Endothelial cell of umbilical vein (primary cell): ENCODE measurements at regions of chr3 and their contacts with region 1.

Region 1: DNA sequence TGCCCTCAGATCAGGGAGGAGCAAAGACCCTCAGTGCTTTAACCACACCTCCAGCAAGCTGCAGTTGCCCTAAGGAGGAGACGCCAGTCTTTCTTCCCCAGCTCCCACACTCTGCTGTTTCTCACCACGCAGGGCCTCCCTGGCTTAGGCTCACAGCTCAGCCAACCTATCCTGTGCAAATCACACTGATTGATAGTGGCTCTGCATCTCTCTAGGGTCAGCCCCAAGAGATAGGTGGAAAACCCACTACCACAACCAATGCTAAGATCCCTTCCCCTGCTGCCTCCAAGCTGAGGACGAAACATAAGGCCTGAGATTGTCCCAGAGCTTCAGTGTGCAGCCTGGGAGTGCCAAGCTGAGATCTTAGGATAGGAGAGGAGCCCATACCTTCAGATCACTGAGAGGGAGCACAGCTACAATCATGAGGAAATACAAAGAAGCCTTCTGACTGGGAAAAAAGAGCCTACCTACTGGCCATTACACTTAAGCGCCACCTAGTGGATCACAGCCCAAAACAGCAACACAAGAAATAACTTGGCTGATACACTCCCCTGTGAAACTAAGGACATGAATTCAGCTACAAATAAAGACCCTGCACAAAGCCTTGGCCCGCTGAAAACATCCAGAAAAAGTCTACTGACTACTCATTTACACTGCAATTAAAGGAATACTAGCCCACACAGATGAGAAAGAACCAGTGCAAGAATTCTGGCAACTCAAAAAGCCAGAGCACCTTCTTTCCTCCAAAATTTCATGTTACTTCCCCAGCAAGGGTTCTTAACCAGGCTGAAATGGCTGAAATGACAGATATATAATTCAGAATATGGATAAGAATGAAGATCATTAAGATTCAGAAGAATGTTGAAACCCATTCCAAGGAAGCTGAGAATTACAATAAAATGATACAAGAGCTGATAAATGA is 271.5 kb upstream of the DCBLD2 start:
- DNase-seq: peak; percentile 76
- H3K4me3 ChIP-seq: no peak overlapping the region
- H3K27ac ChIP-seq: no peak overlapping the region
- H3K4me1 ChIP-seq: no peaks in the 10 kb centered on the region
- H3K27me3 ChIP-seq: no peaks in the 10 kb centered on the region
- CTCF ChIP-seq: peak; percentile 72 to 74
- POLR2A ChIP-seq: no peak

Region 2: DNA sequence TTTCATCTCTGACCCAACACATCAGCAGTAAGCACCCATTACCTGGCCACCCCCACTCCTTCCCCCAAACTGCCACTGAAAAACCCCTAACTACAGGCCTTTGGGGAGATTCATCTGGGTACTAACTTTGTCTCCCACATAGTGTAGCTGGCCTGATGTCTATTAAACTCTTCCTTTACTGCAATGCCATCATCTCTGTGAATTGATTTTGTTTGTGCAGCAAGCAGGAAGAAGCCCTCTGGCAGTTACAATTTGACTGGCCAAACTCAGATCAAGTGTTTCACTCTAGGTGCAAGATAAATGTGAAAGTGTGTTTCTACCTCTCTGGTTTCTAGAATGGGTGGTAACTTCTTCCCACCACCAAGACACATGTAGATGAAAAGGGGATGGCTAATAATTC is 846.1 kb before region 1 on chr3:
- CTCF ChIA-PET with region 1: no interaction called
- POLR2A ChIA-PET with region 1: no interaction called
- dilution Hi-C with region 1: no loop called
- intact Hi-C with region 1: no loop called
- DNase-seq: no peak
- H3K4me3 ChIP-seq: no peak overlapping the region
- H3K27ac ChIP-seq: no peak overlapping the region
- H3K4me1 ChIP-seq: no peaks in the 10 kb centered on the region
- H3K27me3 ChIP-seq: peaks cover 2 to 11% of the 10 kb centered on the region in 2 experiments
- CTCF ChIP-seq: no peak
- POLR2A ChIP-seq: no peak

Region 3: GRCh38 chr3:98602078-98602678 is 570.8 kb before region 1 on chr3:
- CTCF ChIA-PET with region 1: no interaction called
- POLR2A ChIA-PET with region 1: no interaction called
- dilution Hi-C with region 1: no loop called
- intact Hi-C with region 1: loop called (anchors 10 kb)
- DNase-seq: peak; percentile 76
- H3K4me3 ChIP-seq: no peak overlapping the region
- H3K27ac ChIP-seq: no peak overlapping the region
- H3K4me1 ChIP-seq: no peaks in the 10 kb centered on the region
- H3K27me3 ChIP-seq: no peaks in the 10 kb centered on the region
- CTCF ChIP-seq: peak; percentile 60 to 74
- POLR2A ChIP-seq: no peak

Region 4: DNA sequence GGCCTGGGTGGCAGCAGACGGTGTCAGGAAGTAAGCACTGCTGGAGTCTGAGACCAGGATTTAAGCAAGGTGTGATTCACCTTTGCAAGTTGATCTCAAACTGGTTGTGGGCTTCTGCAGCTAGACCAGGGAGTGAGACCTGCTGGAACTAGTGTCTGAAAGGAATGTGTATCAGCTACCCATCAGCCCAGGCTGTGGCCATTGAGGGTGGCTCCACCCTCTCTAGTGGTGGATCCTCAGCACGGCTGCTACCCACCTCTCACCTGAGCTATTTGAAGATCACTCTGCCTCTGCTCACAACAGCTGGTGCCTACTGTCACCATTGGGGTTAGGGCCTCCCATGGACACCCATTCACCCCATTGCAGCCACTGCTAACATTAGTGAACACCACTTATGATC is 131.2 kb before region 1 on chr3:
- CTCF ChIA-PET with region 1: no interaction called
- POLR2A ChIA-PET with region 1: no interaction called
- dilution Hi-C with region 1: no loop called
- intact Hi-C with region 1: no loop called
- DNase-seq: no peak
- H3K4me3 ChIP-seq: no peak overlapping the region
- H3K27ac ChIP-seq: no peak overlapping the region
- H3K4me1 ChIP-seq: no peaks in the 10 kb centered on the region
- H3K27me3 ChIP-seq: peaks cover 0 to 1% of the 10 kb centered on the region in 2 experiments
- CTCF ChIP-seq: no peak
- POLR2A ChIP-seq: no peak

Region 5: GRCh38 chr3:99108508-99108907 is 64.5 kb before region 1 on chr3:
- CTCF ChIA-PET with region 1: interaction called, 111 read pairs
- POLR2A ChIA-PET with region 1: no interaction called
- dilution Hi-C with region 1: no loop called
- intact Hi-C with region 1: no loop called
- DNase-seq: peak; percentile 97
- H3K4me3 ChIP-seq: no peak overlapping the region
- H3K27ac ChIP-seq: peak overlapping the region; percentile 79
- H3K4me1 ChIP-seq: peaks cover 17% of the 10 kb centered on the region
- H3K27me3 ChIP-seq: no peaks in the 10 kb centered on the region
- CTCF ChIP-seq: no peak
- POLR2A ChIP-seq: no peak

Region 6: DNA sequence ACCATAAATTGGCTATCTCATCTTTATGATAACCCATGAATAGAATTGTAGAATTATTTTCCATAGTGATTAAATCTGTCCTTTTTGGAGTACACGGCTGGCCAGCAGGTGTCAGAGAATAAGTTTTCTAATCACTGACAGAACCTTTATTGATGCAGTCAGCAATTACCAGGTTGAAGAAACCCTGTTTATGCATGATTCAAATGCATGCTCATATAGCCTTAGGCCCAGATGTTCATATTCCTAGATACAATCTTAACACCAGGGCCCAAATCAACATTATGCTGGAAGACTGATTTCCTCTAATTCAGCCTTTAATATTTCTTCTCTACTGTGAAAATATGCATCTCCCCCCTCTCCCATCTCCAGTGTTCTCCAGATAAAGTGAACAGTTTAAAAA is 28.0 kb before region 1 on chr3:
- CTCF ChIA-PET with region 1: interaction called, 10 read pairs
- POLR2A ChIA-PET with region 1: no interaction called
- dilution Hi-C with region 1: no loop called
- intact Hi-C with region 1: no loop called
- DNase-seq: peak; percentile 55
- H3K4me3 ChIP-seq: no peak overlapping the region
- H3K27ac ChIP-seq: no peak overlapping the region
- H3K4me1 ChIP-seq: no peaks in the 10 kb centered on the region
- H3K27me3 ChIP-seq: no peaks in the 10 kb centered on the region
- CTCF ChIP-seq: no peak
- POLR2A ChIP-seq: no peak

Region 7: DNA sequence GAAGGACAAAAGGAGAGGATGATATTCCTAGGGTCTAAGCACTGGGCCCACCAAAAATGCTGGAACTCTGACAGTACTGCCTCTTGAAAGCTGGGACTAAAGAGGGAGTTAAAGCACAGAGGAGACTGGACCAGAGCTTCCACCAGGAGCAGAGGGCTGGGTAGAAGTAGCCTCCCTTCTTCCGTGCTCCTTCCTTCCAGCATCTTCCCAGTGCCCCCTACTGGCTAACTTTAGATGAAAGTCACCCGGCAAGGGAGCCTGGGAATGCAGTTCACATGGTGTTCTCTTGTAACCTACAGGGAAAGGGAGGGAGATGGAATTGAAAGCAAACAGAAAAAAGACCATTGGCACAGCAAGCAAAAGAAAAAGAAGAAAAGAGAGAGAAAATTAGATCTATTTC is 359.2 kb after region 1 on chr3:
- CTCF ChIA-PET with region 1: interaction called, 9 read pairs
- POLR2A ChIA-PET with region 1: no interaction called
- dilution Hi-C with region 1: no loop called
- intact Hi-C with region 1: loop called (anchors 2 kb)
- DNase-seq: peak; percentile 88
- H3K4me3 ChIP-seq: no peak overlapping the region
- H3K27ac ChIP-seq: peak overlapping the region; percentile 5
- H3K4me1 ChIP-seq: no peaks in the 10 kb centered on the region
- H3K27me3 ChIP-seq: no peaks in the 10 kb centered on the region
- CTCF ChIP-seq: peak; percentile 75 to 81
- POLR2A ChIP-seq: no peak

Region 8: DNA sequence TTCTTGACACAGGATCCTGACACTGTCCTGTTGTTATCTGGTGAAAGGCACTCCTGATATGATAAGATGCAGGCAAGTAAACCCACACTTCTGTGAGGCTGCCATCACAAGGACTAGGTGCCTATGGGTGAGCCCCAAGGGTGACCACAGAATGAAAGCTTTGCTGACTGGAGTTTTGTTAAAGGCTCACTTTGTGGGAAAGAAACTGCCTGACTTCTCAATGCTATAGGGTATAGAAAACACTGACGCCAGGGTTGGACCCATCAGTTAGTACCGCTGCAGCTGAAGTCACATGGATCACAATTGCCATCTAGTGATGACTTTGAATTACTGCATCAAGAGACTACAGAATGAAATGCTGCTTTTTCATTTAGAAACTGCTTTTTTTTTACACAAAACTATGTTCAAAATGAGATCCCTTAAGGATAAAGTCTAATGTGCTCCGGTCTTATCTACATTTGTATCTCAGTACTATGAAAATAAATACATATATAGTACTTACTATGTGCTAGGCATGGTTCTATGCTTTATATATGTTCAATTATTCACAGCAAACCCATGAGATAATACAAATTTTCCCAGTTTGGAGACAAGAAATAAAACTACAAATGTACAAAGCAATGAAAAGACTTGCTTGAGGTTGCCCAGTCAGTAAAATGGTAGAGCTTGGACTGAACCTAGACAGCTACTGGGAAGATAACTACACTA is 580.4 kb after region 1 on chr3:
- CTCF ChIA-PET with region 1: interaction called, 31 read pairs
- POLR2A ChIA-PET with region 1: no interaction called
- dilution Hi-C with region 1: no loop called
- intact Hi-C with region 1: loop called (anchors 1 kb)
- DNase-seq: peak; percentile 77
- H3K4me3 ChIP-seq: no peak overlapping the region
- H3K27ac ChIP-seq: peak overlapping the region; percentile 21
- H3K4me1 ChIP-seq: peaks cover 28% of the 10 kb centered on the region
- H3K27me3 ChIP-seq: no peaks in the 10 kb centered on the region
- CTCF ChIP-seq: peak; percentile 56 to 58
- POLR2A ChIP-seq: no peak